Naive thymus-derived CD4-positive, alpha-beta T cell (primary cell): ENCODE measurements at regions of chr14 and their contacts with region 1.

Region 1: DNA sequence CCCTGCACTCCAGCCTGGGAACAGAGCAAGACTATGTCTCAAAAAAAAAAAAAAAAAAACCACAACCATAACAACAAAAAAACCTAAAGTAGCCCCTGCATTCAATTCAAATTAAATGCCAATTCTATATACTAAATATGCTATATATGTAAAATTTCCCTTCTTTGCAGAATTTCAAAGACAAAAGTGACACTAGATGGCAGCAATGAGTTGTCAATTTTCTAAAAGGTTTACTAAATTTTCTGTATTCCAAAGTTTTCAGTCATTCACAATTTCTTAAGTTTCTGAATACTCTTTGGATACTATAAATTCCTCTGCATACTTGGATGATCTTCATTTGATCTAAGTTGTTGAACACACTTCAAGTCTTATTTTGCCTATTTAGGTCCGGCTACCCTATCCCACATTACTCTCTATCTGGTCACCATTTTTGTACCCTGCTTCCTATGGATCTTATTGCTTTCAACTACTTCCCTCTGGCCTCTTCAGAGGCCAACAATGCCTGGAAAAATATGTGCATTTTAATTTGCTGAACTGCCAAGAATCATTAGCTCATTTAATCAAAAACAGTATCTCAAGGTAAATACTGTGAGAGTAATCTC is 27.9 kb downstream of the HNRNPC start:
- DNase-seq: peak in 2 of 9 donors; percentile 38 to 49
- ATAC-seq: no peak
- H3K4me3 ChIP-seq: no peak overlapping the region
- H3K4me3 Mint-ChIP-seq: no peak overlapping the region
- H3K27ac ChIP-seq: no peak overlapping the region
- H3K27ac Mint-ChIP-seq: peak overlapping the region in 8 of 9 donors; percentile 3 to 88 (median 70)
- H3K4me1 ChIP-seq: peaks cover 44% of the 10 kb centered on the region in 2 donors
- H3K4me1 Mint-ChIP-seq: peaks cover 36 to 85% (median 60%) of the 10 kb centered on the region in 7 donors
- H3K27me3 ChIP-seq: no peaks in the 10 kb centered on the region
- H3K27me3 Mint-ChIP-seq: no peaks in the 10 kb centered on the region

Region 2: DNA sequence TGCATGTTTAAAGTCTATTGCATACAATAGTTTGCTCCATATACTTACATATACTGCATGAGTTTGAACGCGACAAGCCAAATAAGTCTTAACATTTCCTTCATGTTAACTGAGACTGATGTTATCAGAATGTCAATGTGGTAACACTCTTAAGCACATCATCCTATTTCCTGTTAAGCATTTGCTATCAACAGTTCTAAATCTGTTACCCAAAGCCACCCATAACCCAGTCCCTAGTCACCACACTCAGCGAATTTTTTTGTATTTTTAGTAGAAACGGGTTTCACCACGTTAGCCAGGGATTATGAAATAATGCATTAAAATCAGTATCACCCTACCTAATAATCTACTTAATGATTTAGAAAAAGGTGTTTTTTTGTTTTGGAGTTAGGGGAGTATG is 11.5 kb before region 1 on chr14:
- CTCF ChIA-PET with region 1: interaction called, 3 read pairs
- POLR2A ChIA-PET with region 1: interaction called, 12 read pairs
- intact Hi-C with region 1: loop called in 1 of 2 experiments (anchors 1 kb)
- DNase-seq: peak in 7 of 9 donors; percentile 52 to 76 (median 65)
- ATAC-seq: peak; percentile 93
- H3K4me3 ChIP-seq: no peak overlapping the region
- H3K4me3 Mint-ChIP-seq: peak overlapping the region; percentile 27 to 76 (median 66)
- H3K27ac ChIP-seq: peak overlapping the region; percentile 68
- H3K27ac Mint-ChIP-seq: peak overlapping the region; percentile 82 to 94 (median 89)
- H3K4me1 ChIP-seq: peaks cover 48 to 73% of the 10 kb centered on the region in 2 donors
- H3K4me1 Mint-ChIP-seq: peaks cover 44 to 84% (median 74%) of the 10 kb centered on the region in 7 donors
- H3K27me3 ChIP-seq: no peaks in the 10 kb centered on the region
- H3K27me3 Mint-ChIP-seq: no peaks in the 10 kb centered on the region

Region 3: DNA sequence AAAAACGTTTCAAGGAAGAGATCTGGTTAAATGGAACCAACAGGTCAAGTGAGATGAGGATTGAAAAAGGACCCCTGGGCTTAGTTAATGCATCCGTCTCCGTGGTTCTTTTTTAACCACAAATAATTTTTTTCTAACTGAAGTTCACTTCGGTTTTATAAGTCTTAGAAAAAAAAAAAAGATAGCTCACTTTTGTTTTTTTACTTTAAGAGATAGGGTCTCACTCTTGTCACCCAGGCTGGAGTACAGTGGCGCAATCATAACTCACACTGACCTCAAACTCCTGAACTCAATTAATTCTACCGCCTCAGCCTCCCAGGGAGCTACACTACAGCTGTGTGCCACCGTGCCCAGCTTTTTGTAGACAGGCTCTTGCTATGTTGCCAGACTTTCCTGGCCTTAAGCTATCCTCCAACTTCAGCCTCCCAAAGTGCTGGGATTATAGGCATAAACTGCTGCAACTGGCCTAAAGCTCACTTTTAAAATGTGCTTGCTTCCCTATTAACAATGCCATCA is 16.1 kb after region 1 on chr14:
- CTCF ChIA-PET with region 1: interaction called, 4 read pairs
- POLR2A ChIA-PET with region 1: interaction called, 13 read pairs
- intact Hi-C with region 1: loop called in 1 of 2 experiments (anchors 2 kb)
- DNase-seq: no peak
- ATAC-seq: peak; percentile 30
- H3K4me3 ChIP-seq: peak overlapping the region; percentile 22
- H3K4me3 Mint-ChIP-seq: peak overlapping the region; percentile 64 to 79 (median 69)
- H3K27ac ChIP-seq: peak overlapping the region; percentile 10
- H3K27ac Mint-ChIP-seq: peak overlapping the region in 8 of 9 donors; percentile 44 to 84 (median 62)
- H3K4me1 ChIP-seq: peaks cover 58 to 59% of the 10 kb centered on the region in 2 donors
- H3K4me1 Mint-ChIP-seq: peaks cover 53 to 84% (median 68%) of the 10 kb centered on the region in 7 donors
- H3K27me3 ChIP-seq: no peaks in the 10 kb centered on the region
- H3K27me3 Mint-ChIP-seq: no peaks in the 10 kb centered on the region

Region 4: GRCh38 chr14:21263656-21264411 is 22.5 kb after region 1 on chr14:
- CTCF ChIA-PET with region 1: interaction called, 4 read pairs
- POLR2A ChIA-PET with region 1: interaction called, 8 read pairs
- intact Hi-C with region 1: loop called in 1 of 2 experiments (anchors 2 kb)
- DNase-seq: peak in 1 of 9 donors; percentile 60
- ATAC-seq: peak; percentile 69
- H3K4me3 ChIP-seq: peak overlapping the region; percentile 5
- H3K4me3 Mint-ChIP-seq: peak overlapping the region; percentile 63 to 99 (median 86)
- H3K27ac ChIP-seq: peak overlapping the region; percentile 28
- H3K27ac Mint-ChIP-seq: peak overlapping the region; percentile 3 to 100 (median 41)
- H3K4me1 ChIP-seq: peaks cover 46 to 56% of the 10 kb centered on the region in 2 donors
- H3K4me1 Mint-ChIP-seq: peaks cover 57 to 80% (median 77%) of the 10 kb centered on the region in 7 donors
- H3K27me3 ChIP-seq: no peaks in the 10 kb centered on the region
- H3K27me3 Mint-ChIP-seq: no peaks in the 10 kb centered on the region

Region 5: GRCh38 chr14:21352587-21352986 is 111.3 kb after region 1 on chr14:
- CTCF ChIA-PET with region 1: no interaction called
- POLR2A ChIA-PET with region 1: interaction called, 3 read pairs
- intact Hi-C with region 1: loop called in 1 of 2 experiments (anchors 5 kb)
- DNase-seq: no peak
- ATAC-seq: peak; percentile 73
- H3K4me3 ChIP-seq: no peak overlapping the region
- H3K4me3 Mint-ChIP-seq: peak overlapping the region in 1 of 10 donors; percentile 5
- H3K27ac ChIP-seq: no peak overlapping the region
- H3K27ac Mint-ChIP-seq: peak overlapping the region in 6 of 9 donors; percentile 3 to 53 (median 28)
- H3K4me1 ChIP-seq: no peaks in the 10 kb centered on the region
- H3K4me1 Mint-ChIP-seq: peaks cover 0 to 6% (median 0%) of the 10 kb centered on the region in 7 donors
- H3K27me3 ChIP-seq: no peaks in the 10 kb centered on the region
- H3K27me3 Mint-ChIP-seq: no peaks in the 10 kb centered on the region

Region 6: DNA sequence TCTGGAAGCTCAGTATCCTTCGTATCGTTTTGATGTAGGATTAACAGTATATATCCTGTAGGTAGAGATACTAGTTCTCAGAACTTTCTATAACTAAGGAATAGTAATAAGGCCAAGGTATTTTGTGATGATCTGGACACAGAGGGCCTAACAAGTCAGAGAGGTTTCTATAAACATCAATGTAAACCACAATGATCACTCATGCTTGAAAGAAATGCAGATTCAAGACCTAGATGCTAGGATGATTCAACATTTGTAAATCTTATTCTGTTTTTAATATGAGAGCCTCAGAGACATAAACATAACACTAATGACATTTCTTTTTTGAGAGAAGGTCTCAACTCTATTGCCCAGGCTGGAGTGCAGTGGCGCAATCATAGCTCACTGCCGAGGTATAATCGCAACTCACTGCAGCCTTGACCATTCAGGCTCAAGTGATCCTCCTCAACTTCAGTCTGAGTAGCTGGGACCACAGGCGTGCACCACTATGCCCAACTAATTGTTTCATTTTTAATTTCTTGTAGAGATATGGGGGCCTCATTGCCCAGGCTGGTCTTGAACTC is 126.3 kb after region 1 on chr14:
- CTCF ChIA-PET with region 1: no interaction called
- POLR2A ChIA-PET with region 1: no interaction called
- intact Hi-C with region 1: loop called in 1 of 2 experiments (anchors 5 kb)
- DNase-seq: no peak
- ATAC-seq: no peak
- H3K4me3 ChIP-seq: no peak overlapping the region
- H3K4me3 Mint-ChIP-seq: no peak overlapping the region
- H3K27ac ChIP-seq: no peak overlapping the region
- H3K27ac Mint-ChIP-seq: peak overlapping the region in 1 of 9 donors; percentile 9
- H3K4me1 ChIP-seq: no peaks in the 10 kb centered on the region
- H3K4me1 Mint-ChIP-seq: peaks cover 0 to 14% (median 0%) of the 10 kb centered on the region in 7 donors
- H3K27me3 ChIP-seq: no peaks in the 10 kb centered on the region
- H3K27me3 Mint-ChIP-seq: no peaks in the 10 kb centered on the region